CD8-positive, alpha-beta T cell (primary cell): ENCODE measurements at regions of chr12 and their contacts with region 1.

Region 1: DNA sequence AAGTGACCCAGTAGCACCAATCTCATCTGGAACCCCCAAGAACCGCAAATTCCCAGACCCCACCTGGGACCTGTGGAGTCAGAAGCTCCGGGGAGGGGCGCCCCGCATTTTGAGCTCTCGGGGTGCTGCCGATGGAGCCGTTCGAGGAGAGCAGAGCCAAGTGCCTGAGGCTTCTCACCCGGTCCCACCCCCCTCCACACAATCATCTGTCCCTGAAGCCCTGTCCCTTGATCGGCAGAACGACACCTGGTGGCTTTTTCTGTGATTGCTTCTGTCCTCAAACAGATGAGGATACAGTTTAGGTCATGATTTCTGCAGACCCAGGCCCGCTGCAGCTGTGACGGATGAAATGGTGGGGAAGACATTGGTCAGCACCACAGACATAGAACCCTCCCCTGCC is 74.7 kb downstream of the NOC4L start:
- DNase-seq: peak in 7 of 9 experiments; percentile 6 to 74 (median 53)
- ATAC-seq: peak; percentile 72
- H3K4me3 ChIP-seq: no peak overlapping the region
- H3K4me3 Mint-ChIP-seq: no peak overlapping the region
- H3K27ac ChIP-seq: no peak overlapping the region
- H3K27ac Mint-ChIP-seq: no peak overlapping the region
- H3K4me1 ChIP-seq: peaks cover 10% of the 10 kb centered on the region
- H3K4me1 Mint-ChIP-seq: peaks cover 11% of the 10 kb centered on the region
- H3K27me3 ChIP-seq: peaks cover 0 to 4% of the 10 kb centered on the region in 2 experiments
- H3K27me3 Mint-ChIP-seq: peaks cover 20% of the 10 kb centered on the region
- CTCF ChIP-seq: peak; percentile 61

Region 2: GRCh38 chr12:130796985-130797686 is 1421.8 kb before region 1 on chr12:
- CTCF ChIA-PET with region 1: no interaction called
- POLR2A ChIA-PET with region 1: no interaction called
- intact Hi-C with region 1: no loop called
- DNase-seq: peak in 5 of 9 experiments; percentile 26 to 84 (median 67)
- ATAC-seq: peak; percentile 93
- H3K4me3 ChIP-seq: peak overlapping the region; percentile 9 to 35
- H3K4me3 Mint-ChIP-seq: peak overlapping the region; percentile 79
- H3K27ac ChIP-seq: peak overlapping the region; percentile 60 to 78
- H3K27ac Mint-ChIP-seq: peak overlapping the region; percentile 96
- H3K4me1 ChIP-seq: no peaks in the 10 kb centered on the region
- H3K4me1 Mint-ChIP-seq: peaks cover 5% of the 10 kb centered on the region
- H3K27me3 ChIP-seq: no peaks in the 10 kb centered on the region
- H3K27me3 Mint-ChIP-seq: no peaks in the 10 kb centered on the region
- CTCF ChIP-seq: no peak

Region 3: DNA sequence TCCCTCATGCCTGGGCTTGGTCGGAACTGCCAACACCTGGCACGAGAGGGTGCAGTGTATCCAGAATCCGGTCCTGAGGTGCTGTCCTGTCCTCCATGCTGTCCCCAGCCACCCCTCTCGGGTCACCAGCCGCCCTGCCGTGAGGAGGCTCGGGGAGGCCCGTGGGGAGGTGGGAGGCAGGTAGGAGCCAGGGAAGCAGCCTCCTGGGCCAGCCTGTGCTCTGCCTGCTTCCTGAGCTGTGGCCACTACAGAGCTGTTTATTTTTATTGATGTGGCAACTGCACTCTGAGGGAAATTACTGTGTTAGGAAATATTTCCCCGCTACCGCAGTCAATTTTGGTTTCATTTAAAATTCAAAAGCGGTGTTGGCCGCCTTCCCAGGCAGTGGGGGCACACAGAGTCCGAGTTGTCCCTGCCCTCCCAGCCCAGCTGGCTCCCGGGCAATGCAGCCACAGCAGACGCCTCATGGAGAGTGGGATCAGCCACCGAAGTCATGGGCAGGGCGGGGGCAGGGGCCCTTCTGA is 56.3 kb before region 1 on chr12:
- CTCF ChIA-PET with region 1: interaction called, 11 read pairs
- POLR2A ChIA-PET with region 1: interaction called, 3 read pairs
- intact Hi-C with region 1: no loop called
- DNase-seq: peak in 3 of 9 experiments; percentile 21 to 71 (median 56)
- ATAC-seq: peak; percentile 50
- H3K4me3 ChIP-seq: no peak overlapping the region
- H3K4me3 Mint-ChIP-seq: no peak overlapping the region
- H3K27ac ChIP-seq: no peak overlapping the region
- H3K27ac Mint-ChIP-seq: no peak overlapping the region
- H3K4me1 ChIP-seq: peaks cover 23% of the 10 kb centered on the region
- H3K4me1 Mint-ChIP-seq: peaks cover 14% of the 10 kb centered on the region
- H3K27me3 ChIP-seq: no peaks in the 10 kb centered on the region
- H3K27me3 Mint-ChIP-seq: no peaks in the 10 kb centered on the region
- CTCF ChIP-seq: no peak